ENCODE measurements at regions of chr18 and their contacts with region 1.

Region 1: DNA sequence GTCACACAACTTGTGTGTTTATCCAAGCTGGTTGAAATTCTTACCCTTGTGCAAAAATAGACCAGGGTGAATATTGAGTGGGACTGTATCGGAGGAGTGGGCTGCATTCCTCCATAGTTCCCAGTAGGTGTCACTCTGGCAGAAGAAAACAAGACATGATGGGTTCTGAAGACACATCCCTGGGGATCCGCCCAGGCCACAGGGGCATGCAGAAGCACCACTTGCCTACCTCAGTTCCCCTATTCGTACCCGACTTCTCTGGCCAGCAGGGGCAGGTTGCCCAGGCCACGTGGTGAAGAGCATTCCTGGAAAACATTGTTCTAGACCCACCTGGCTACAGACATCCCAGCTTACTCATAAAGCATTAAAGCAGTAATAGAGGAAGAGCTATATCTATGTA is 168.2 kb downstream of the FAM210A start:
- DNase-seq: peak; percentile 59 to 81 (median 71)
- H3K4me3 ChIP-seq: no peak overlapping the region
- H3K4me3 Mint-ChIP-seq: no peak overlapping the region
- H3K27ac ChIP-seq: no peak overlapping the region
- H3K27ac Mint-ChIP-seq: peak overlapping the region; percentile 10 to 89 (median 75)
- H3K4me1 ChIP-seq: peaks cover 24 to 26% of the 10 kb centered on the region in 2 donors
- H3K4me1 Mint-ChIP-seq: peaks cover 28% of the 10 kb centered on the region
- H3K27me3 ChIP-seq: no peaks in the 10 kb centered on the region
- H3K27me3 Mint-ChIP-seq: peaks cover 0 to 3% (median 2%) of the 10 kb centered on the region in 3 donors
- CTCF ChIP-seq: peak; percentile 87

Region 2: DNA sequence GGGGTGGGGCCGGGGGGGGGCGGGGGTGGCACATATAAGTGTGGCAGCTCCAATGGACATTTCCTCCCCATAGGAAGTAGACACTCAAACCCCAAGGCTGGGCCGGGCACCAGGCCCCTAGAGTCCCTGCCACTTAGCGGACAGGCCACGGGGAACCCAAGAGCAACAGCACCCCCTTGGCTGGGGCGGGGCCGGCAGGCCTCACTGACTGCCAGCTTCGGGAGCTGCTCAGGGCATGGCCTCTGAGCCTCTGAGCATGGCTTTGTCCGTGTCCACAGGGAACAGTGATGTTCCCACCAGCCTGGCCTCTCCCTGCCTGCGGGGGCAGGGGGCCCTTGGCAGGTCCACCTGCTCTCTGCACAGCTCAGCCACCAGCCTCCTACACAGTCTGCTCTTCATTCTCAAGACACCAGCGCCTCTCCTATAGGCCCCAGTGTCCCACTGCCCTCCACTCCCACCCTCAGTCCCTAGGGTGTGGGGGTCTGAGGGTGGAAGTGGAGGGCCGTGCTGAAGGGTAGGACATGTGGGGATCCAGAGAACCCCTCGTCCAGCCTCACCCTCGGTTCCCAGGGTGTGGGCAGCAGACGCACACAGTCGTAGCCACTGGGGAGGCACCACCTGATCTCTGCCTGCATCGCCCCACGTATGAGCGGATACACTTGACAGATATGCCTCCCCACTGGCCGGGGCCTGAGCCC is 61.5 kb after region 1 on chr18:
- intact Hi-C with region 1: loop called (anchors 2 to 5 kb)
- DNase-seq: no peak
- H3K4me3 ChIP-seq: no peak overlapping the region
- H3K4me3 Mint-ChIP-seq: no peak overlapping the region
- H3K27ac ChIP-seq: no peak overlapping the region
- H3K27ac Mint-ChIP-seq: no peak overlapping the region
- H3K4me1 ChIP-seq: peaks cover 34% of the 10 kb centered on the region in 2 donors
- H3K4me1 Mint-ChIP-seq: peaks cover 32% of the 10 kb centered on the region
- H3K27me3 ChIP-seq: no peaks in the 10 kb centered on the region
- H3K27me3 Mint-ChIP-seq: peaks cover 0 to 5% (median 2%) of the 10 kb centered on the region in 3 donors
- CTCF ChIP-seq: no peak

Region 3: DNA sequence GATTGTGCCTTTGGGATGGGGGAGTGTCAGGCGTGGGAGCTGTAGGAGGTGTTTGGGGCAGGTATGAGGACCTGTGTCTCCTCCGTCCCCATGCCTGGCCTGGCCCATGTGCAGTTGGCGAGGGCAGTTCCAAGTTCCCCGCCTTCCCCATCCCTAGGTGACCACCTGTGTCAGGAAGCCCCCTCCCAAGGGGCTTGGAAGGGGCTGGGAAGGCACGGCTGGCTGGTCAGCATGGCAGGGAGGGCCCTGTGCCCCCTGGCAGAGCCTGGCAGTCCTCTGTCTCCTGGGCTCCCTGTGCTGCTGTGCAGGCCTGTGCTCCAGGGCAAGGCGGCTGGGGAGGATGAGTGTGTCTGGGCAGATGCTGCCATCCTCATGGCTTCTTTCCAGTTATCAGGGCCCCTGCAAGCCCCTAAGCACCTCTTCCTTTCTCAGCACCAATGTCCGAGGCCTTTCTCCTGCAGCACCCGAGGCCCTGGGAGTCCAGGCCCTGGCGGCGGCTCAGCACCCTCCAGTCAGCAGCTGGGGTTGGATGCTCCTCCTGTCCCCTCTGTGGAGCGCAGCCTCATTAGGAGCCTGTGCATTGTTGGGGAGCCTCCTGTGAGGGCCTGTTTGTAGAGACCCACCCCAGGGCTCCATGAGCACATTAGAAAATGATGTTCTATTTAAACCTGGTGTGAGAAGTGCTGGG is 66.6 kb after region 1 on chr18:
- intact Hi-C with region 1: loop called (anchors 2 to 5 kb)
- DNase-seq: no peak
- H3K4me3 ChIP-seq: no peak overlapping the region
- H3K4me3 Mint-ChIP-seq: no peak overlapping the region
- H3K27ac ChIP-seq: no peak overlapping the region
- H3K27ac Mint-ChIP-seq: peak overlapping the region in 2 of 7 donors; percentile 5 to 9
- H3K4me1 ChIP-seq: peaks cover 17 to 20% of the 10 kb centered on the region in 2 donors
- H3K4me1 Mint-ChIP-seq: peaks cover 14% of the 10 kb centered on the region
- H3K27me3 ChIP-seq: no peaks in the 10 kb centered on the region
- H3K27me3 Mint-ChIP-seq: peaks cover 0 to 4% (median 2%) of the 10 kb centered on the region in 3 donors
- CTCF ChIP-seq: no peak